Sigmoid colon (tissue), 7 donors: ENCODE measurements at regions of chr3 and their contacts with region 1.

Region 1: GRCh38 chr3:16884084-16884747 is 539 bp upstream of the PLCL2 start:
- DNase-seq: peak; percentile 77
- H3K4me3 ChIP-seq: peak overlapping the region; percentile 61 to 81 (median 74)
- H3K27ac ChIP-seq: peak overlapping the region; percentile 77 to 88 (median 82)
- H3K4me1 ChIP-seq: peaks cover 0 to 25% (median 11%) of the 10 kb centered on the region in 4 donors
- H3K27me3 ChIP-seq: no peaks in the 10 kb centered on the region
- CTCF ChIP-seq: peak in 2 of 4 experiments; percentile 24 to 47
- EP300 ChIP-seq: no peak
- POLR2A ChIP-seq: no peak

Region 2: GRCh38 chr3:16842272-16843270 is 41.6 kb before region 1 on chr3:
- intact Hi-C with region 1: loop called (anchors 5 kb)
- DNase-seq: peak; percentile 71
- H3K4me3 ChIP-seq: no peak overlapping the region
- H3K27ac ChIP-seq: peak overlapping the region; percentile 35 to 60 (median 47)
- H3K4me1 ChIP-seq: peaks cover 0 to 28% (median 12%) of the 10 kb centered on the region in 4 donors
- H3K27me3 ChIP-seq: no peaks in the 10 kb centered on the region
- CTCF ChIP-seq: no peak
- EP300 ChIP-seq: no peak
- POLR2A ChIP-seq: no peak